GM18951 (cell line): ENCODE measurements at regions of chr2 and their contacts with region 1.

Region 1: GRCh38 chr2:216519154-216519762 is 20.6 kb downstream of the RPL37A start:
- POLR2A ChIP-seq: no peak

Region 2: DNA sequence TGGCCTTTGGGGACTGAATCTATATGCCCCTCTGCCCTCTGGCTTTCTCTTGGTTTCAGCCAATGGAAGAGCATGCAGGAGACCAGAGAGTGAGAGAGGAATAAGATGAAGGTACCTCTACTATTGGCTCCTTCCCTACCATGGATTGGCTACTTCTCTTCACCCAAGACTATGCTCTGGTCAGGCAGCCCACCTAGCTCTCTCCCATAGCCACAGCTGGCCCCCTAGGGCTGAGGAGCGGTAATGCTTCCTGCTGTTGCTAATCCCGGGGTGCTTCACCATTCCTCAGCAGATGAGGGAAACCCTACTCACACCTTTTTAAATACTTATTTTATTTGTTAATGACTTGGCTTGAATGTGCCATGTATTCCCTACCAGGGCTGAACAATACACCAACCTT is 648.3 kb before region 1 on chr2:
- in situ Hi-C with region 1: no loop called
- POLR2A ChIP-seq: no peak

Region 3: GRCh38 chr2:216666461-216667233 is 147.4 kb after region 1 on chr2:
- in situ Hi-C with region 1: loop called (anchors 5 kb)
- POLR2A ChIP-seq: no peak

Region 4: GRCh38 chr2:217729421-217730053 is 1210.3 kb after region 1 on chr2:
- in situ Hi-C with region 1: loop called (anchors 25 kb)
- POLR2A ChIP-seq: no peak